Sigmoid colon (tissue), 7 donors: ENCODE measurements at regions of chr5 and their contacts with region 1.

Region 1: DNA sequence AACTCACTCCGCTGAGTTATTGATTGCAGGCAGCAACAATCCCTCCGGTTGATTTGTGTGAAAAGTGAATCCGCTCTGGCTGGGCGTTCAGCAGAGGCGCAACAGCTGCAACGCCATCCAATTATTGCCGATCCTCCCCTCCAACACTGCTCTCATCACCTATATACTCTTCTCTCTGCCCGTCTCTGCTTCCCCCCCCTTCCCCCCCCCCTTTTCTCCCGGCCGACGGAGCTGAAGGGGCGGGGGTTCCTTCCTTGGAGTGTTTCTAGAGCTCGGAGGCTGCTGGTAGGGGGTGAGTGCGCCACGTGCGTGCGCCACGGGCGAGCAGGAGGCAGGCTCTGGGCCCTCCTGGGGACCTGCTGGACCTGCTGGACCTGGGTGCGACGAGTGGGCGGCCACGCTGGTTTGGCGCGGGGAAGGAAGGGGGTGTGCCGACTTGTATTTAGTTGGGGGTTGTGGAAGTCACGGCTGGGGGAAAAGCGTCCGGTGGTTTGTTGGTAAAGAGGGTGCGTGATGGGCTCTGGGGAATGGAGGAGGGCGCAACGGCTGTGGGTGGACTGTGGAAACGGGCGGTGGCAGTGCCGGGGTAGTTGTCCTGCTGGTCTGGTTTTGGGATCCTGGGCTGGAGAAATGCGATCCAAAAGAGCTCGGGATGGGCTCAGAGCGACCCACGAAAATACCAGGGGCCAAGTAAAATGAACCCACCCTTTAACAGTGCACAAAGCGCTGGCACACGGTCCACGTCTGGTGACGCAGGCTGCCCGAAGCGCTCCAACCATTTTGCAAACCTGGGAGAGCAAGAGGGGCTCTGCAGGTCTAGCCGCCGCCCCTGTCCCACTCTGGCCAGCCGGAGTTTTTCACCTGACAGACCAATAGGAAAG is 6.4 kb upstream of the MEF2C start:
- DNase-seq: peak; percentile 86
- H3K4me3 ChIP-seq: peak overlapping the region; percentile 54 to 67 (median 61)
- H3K27ac ChIP-seq: peak overlapping the region; percentile 87 to 93 (median 88)
- H3K4me1 ChIP-seq: peaks cover 0 to 53% (median 43%) of the 10 kb centered on the region in 4 donors
- H3K27me3 ChIP-seq: no peaks in the 10 kb centered on the region
- CTCF ChIP-seq: no peak
- EP300 ChIP-seq: no peak
- POLR2A ChIP-seq: peak; percentile 45 to 57

Region 2: GRCh38 chr5:88952344-88952743 is 62.9 kb after region 1 on chr5:
- intact Hi-C with region 1: loop called (anchors 5 kb)
- DNase-seq: no peak
- H3K4me3 ChIP-seq: no peak overlapping the region
- H3K27ac ChIP-seq: peak overlapping the region in 3 of 4 donors; percentile 27 to 65 (median 63)
- H3K4me1 ChIP-seq: peaks cover 0 to 52% (median 38%) of the 10 kb centered on the region in 4 donors
- H3K27me3 ChIP-seq: no peaks in the 10 kb centered on the region
- CTCF ChIP-seq: no peak
- EP300 ChIP-seq: no peak
- POLR2A ChIP-seq: no peak